ENCODE measurements at regions of chr2 and their contacts with region 1.

Region 1: GRCh38 chr2:3558205-3559014 is at the start of gene RNASEH1:
- DNase-seq: peak; percentile 98
- H3K4me3 Mint-ChIP-seq: peak within 1 kb of the TSS; percentile 79
- H3K27ac Mint-ChIP-seq: peak within 1 kb of the TSS; percentile 95
- H3K4me1 Mint-ChIP-seq: peaks cover 10% of the 10 kb centered on the region
- H3K27me3 Mint-ChIP-seq: no peaks in the 10 kb centered on the region
- CTCF ChIP-seq: no peak
- total RNA-seq, gene RNASEH1: 43.2 and 48.3 TPM in 2 replicates

Region 2: DNA sequence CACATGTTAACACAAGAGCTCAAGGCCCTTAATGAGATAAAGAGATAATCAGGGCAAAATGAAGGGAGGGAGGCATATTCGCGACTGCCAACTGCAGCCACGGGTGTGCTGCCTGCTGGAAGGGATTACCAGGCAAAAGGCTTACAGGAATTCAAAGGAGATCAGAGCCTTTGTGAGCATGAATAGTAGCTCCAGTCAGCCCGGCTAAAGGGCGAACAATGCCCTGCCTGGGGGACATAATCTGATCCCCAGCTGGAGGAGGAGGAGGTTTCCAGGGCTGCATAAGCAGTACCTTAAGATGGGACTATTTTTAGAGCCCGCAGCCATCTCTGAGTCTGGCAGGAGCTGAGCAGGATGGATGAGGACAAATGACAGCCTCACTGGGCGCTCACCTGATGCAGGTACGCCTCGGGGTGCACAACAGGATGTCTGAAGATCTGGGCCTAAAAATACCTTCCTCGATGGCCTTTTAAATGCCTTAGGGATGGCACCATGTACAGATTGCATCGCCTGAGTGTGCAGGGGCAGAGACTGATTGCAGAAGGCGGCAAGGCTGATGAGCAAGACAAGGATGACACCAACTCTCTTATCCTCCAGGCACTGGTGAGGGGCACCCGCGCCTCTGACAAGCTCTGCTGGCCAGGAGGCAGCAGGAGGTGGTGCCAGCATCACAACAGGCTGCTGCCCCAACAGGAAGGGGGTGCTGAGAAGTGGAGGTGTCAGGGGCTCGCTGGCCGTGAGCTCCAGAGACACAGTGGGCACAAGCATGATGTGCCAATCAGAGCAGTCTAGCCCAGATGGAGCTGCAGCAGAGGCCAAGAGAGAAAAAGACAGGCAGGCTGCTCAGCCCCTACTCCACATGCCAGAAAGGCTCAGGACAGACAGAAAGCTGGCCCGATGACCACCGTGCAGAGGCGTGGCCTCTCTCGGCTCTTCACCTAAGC is 292.2 kb before region 1 on chr2:
- CTCF ChIA-PET with region 1: no interaction called
- POLR2A ChIA-PET with region 1: no interaction called
- intact Hi-C with region 1: no loop called
- DNase-seq: no peak
- H3K4me3 Mint-ChIP-seq: no peak overlapping the region
- H3K27ac Mint-ChIP-seq: no peak overlapping the region
- H3K4me1 Mint-ChIP-seq: no peaks in the 10 kb centered on the region
- H3K27me3 Mint-ChIP-seq: no peaks in the 10 kb centered on the region
- CTCF ChIP-seq: no peak

Region 3: DNA sequence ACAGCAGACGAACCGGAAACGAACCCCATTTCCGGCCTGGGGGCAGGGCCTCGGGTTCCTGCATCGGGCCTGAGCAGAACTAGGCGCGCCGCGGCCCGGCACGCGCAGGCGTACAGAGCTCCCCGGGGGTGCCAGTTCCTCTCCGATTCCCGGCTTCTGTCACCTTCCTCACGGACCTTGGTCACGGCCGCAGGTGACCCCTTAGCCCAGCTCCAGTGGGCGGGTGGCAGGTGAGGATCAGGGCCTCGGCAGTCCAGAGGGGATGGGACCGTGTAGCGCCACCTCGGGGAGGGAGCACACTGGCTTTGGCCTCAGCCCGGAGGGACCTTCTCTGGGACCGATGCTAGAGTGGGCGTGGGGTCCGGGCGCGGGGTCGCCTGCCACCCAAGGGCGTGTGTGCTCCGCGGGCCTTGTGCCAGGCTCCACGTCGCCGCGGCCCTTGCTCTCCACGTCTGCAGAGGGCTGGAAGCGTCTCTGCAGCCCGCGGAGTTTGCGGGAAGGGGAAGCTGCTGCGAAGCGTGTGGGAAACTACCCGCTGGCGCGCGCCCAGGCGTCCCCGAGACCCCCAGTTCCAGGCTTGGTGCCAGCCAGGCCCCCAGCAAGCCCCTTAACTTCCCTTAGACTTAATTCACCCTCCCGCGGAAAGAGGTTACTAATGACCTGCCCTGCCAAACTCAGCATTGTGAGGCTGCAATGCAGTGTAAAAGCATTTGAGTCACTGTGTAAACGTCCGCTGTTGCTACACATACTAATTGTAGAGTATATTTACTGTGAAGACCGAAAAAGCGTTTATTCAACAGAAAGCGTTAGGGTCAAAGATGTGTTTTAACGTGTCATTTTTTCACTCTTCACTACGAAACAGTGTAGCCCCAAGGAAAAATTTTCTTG is 178.5 kb before region 1 on chr2 and contains the start of gene TRAPPC12:
- CTCF ChIA-PET with region 1: no interaction called
- POLR2A ChIA-PET with region 1: interaction called, 10 read pairs
- intact Hi-C with region 1: no loop called
- DNase-seq: peak; percentile 93
- H3K4me3 Mint-ChIP-seq: peak within 1 kb of the TSS; percentile 99
- H3K27ac Mint-ChIP-seq: peak within 1 kb of the TSS; percentile 90
- H3K4me1 Mint-ChIP-seq: peaks cover 5% of the 10 kb centered on the region
- H3K27me3 Mint-ChIP-seq: no peaks in the 10 kb centered on the region
- CTCF ChIP-seq: peak; percentile 35
- total RNA-seq, gene TRAPPC12: 84.4 and 102 TPM in 2 replicates

Region 4: DNA sequence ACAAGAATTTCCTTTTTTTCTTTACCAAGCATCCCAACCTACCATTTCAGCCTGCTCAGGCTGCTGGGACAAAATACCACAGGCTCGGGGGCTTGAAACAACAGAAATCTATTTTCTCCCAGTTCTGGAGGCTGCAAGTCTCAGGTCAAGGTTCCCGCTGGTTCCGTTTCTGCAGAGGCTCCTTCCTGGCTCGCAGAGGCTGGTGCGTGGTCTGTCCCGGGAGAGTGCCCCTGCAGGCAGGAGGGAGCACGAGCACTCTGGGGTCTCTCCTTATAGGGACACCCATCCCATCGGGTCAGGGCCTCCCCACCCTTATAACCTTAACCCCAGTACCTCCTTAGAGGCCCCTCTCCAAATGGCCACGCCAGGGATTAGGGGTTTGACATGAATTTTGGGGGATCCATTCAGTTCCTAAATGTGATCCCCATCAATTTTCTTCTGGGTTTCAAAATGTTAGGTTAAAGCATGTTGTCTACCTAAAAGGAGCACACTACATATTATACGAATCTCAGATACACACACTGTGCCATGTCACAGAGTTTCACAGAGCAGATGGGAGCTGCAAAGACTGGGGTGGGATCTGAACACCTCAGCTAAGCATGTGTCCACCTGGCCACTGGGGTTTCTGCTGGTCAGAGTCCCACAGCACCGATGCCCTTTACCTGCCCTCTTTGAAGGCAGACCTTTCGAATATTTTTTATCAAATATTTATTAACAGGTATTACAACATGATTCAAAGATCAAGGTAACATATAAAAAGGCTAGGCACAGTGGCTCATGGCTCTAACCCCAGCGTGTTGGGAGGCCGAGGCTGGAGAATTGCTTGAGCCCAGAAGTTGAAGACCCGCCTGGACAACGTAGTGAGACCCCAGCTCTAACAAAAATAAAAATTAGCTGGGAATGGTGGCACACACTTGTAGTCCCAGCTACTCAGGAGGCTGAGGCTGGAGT is 21.5 kb before region 1 on chr2:
- CTCF ChIA-PET with region 1: no interaction called
- POLR2A ChIA-PET with region 1: interaction called, 18 read pairs
- intact Hi-C with region 1: loop called (anchors 1 kb)
- DNase-seq: peak; percentile 15
- H3K4me3 Mint-ChIP-seq: peak overlapping the region; percentile 66
- H3K27ac Mint-ChIP-seq: peak overlapping the region; percentile 95
- H3K4me1 Mint-ChIP-seq: peaks cover 15% of the 10 kb centered on the region
- H3K27me3 Mint-ChIP-seq: no peaks in the 10 kb centered on the region
- CTCF ChIP-seq: no peak

Region 5: GRCh38 chr2:3620834-3621233 is 62.4 kb after region 1 on chr2:
- CTCF ChIA-PET with region 1: no interaction called
- POLR2A ChIA-PET with region 1: interaction called, 20 read pairs
- intact Hi-C with region 1: no loop called
- DNase-seq: peak; percentile 42
- H3K4me3 Mint-ChIP-seq: peak overlapping the region; percentile 44
- H3K27ac Mint-ChIP-seq: peak overlapping the region; percentile 95
- H3K4me1 Mint-ChIP-seq: peaks cover 16% of the 10 kb centered on the region
- H3K27me3 Mint-ChIP-seq: no peaks in the 10 kb centered on the region
- CTCF ChIP-seq: no peak

Region 6: DNA sequence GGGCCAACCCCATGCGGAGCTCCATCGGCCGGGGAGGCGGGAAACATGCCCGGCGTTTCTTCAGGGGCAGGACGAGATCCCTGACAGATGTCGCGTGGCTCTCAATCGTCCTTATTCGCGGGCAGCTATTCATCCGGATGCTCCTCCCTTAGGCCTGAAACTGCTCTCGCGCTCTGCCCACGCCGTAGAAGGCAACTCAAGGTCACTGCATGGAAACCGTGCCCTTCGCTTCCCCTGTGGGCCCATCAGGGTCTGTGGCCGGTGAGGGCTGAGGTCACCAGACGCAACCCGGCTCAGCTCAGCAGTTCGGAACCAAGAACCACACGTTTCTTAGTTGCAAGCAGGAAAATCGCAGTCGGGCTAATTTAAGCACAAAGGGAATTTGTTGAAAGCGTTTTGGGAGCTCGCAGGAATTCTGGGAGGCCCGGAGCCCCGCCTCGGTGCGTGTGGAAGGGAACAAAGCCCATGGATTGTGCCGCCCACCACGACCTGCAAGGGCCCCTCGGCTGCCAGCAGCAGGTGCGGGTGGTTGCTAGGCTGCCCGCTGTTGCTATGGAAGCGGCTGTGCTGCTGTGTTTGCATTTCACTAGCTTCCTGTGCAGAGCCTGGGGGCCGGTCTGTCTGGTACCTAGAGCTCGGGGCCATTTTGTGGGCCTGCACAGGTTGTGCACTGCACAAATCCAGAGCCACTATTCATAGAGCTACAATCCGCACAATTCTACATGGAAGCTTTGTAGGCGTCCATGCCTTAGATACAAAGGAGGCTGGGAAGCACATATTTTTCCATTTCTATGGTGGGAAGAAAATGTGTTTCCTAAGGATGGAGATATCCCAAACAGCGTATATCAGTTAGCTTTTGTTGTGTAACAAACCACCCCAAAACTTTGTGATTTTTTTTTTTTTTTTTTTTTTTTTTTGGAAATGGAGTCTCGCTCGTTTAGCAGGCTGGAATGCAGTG is 93.6 kb after region 1 on chr2:
- CTCF ChIA-PET with region 1: interaction called, 3 read pairs
- POLR2A ChIA-PET with region 1: interaction called, 7 read pairs
- intact Hi-C with region 1: loop called (anchors 1 kb)
- DNase-seq: no peak
- H3K4me3 Mint-ChIP-seq: no peak overlapping the region
- H3K27ac Mint-ChIP-seq: no peak overlapping the region
- H3K4me1 Mint-ChIP-seq: peaks cover 7% of the 10 kb centered on the region
- H3K27me3 Mint-ChIP-seq: no peaks in the 10 kb centered on the region
- CTCF ChIP-seq: no peak

Region 7: DNA sequence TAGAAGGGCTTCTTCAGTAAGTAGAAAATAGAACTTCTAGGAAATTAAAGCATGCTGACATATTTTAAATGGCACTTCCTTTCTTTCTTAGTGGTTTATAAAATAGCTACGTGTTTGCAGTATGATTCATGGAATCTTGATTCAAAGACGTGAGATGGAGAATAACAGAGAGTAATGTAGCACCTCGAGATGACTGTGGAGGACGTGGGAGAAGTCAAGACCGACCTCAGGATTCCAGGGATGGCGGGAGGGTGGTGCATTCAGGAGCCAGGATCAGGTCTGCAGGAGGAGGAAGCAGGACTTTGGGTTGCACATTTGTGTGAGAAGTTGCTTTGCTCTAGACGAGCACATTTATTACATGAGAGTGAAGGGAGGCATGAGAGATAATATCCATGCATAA is 200.9 kb after region 1 on chr2:
- CTCF ChIA-PET with region 1: no interaction called
- POLR2A ChIA-PET with region 1: no interaction called
- intact Hi-C with region 1: no loop called
- DNase-seq: no peak
- H3K4me3 Mint-ChIP-seq: no peak overlapping the region
- H3K27ac Mint-ChIP-seq: no peak overlapping the region
- H3K4me1 Mint-ChIP-seq: peaks cover 12% of the 10 kb centered on the region
- H3K27me3 Mint-ChIP-seq: peaks cover 22% of the 10 kb centered on the region
- CTCF ChIP-seq: no peak

Measured in MCF 10A (cell line).